ENCODE measurements at regions of chr1 and their contacts with region 1.

Region 1: DNA sequence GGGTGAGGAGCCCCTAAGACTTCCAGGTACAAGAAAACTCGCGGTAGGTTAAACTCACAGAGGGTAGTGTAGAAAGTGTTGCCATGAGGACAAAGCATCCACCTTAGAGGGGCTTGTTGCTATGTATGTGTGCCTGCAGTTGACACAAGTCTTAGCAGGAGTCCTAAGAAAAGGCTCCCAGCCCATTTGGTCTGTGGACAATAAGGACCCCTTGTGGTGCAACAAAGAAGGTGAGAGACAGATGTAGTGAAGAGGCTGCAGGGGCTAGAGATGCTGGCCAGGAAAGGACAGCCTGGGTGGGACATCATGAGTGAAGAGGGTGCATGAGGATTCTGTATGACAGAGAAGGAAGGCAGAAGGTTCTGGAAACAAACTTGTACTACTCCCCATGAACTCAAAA is 36.3 kb upstream of the IL10 start:
- DNase-seq: peak; percentile 66
- H3K4me3 Mint-ChIP-seq: no peak overlapping the region
- H3K27ac Mint-ChIP-seq: peak overlapping the region; percentile 3
- H3K4me1 Mint-ChIP-seq: peaks cover 45% of the 10 kb centered on the region
- H3K27me3 Mint-ChIP-seq: no peaks in the 10 kb centered on the region

Region 2: DNA sequence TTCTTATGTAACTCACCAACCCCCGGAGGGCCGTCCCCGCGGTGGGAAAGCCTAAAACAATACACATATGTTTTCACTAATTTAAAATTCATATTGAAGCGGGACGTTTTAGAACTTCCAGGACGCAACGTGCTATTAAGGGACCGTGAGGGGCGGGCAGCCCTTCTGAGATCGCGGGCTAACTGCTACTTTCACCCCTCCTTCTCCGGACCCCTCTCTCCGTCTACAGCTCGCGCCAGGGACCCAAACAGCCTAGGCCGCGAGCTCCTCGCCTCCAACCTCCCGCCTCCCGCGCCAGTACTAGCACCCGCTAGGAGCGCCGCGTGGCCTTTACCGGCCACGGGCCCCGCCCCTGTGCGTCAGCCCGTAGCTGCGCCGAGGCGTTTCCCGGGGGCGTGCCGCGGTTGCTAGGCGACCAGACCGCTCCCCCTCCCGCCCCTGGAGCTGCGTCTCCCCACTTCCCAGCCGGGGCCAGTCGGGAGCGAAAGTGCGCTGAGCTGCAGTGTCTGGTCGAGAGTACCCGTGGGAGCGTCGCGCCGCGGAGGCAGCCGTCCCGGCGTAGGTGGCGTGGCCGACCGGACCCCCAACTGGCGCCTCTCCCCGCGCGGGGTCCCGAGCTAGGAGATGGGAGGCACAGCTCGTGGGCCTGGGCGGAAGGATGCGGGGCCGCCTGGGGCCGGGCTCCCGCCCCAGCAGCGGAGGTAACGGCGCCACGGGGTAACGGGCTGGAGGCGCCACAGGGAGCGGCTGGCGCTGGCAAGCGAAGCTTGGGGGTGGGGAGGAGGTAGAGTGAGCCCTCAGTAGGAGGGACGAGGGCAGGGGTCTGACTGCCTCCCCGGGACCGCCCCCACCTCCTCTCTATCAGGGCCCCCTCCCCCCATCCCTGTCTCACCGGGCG is 173.3 kb before region 1 on chr1 and contains the start of gene DYRK3:
- CTCF ChIA-PET with region 1: interaction called, 7 read pairs
- POLR2A ChIA-PET with region 1: no interaction called
- intact Hi-C with region 1: loop called (anchors 2 kb)
- DNase-seq: peak; percentile 96
- H3K4me3 Mint-ChIP-seq: peak within 1 kb of the TSS; percentile 80
- H3K27ac Mint-ChIP-seq: peak within 1 kb of the TSS; percentile 80
- H3K4me1 Mint-ChIP-seq: peaks cover 25% of the 10 kb centered on the region
- H3K27me3 Mint-ChIP-seq: peaks cover 5% of the 10 kb centered on the region
- total RNA-seq, gene DYRK3: 10.1 to 11.4 TPM

Region 3: GRCh38 chr1:206734499-206735142 is 74.0 kb before region 1 on chr1:
- CTCF ChIA-PET with region 1: interaction called, 315 read pairs
- POLR2A ChIA-PET with region 1: interaction called, 30 read pairs
- intact Hi-C with region 1: loop called (anchors 1 kb)
- DNase-seq: peak; percentile 85
- H3K4me3 Mint-ChIP-seq: no peak overlapping the region
- H3K27ac Mint-ChIP-seq: peak overlapping the region; percentile 16
- H3K4me1 Mint-ChIP-seq: peaks cover 57% of the 10 kb centered on the region
- H3K27me3 Mint-ChIP-seq: no peaks in the 10 kb centered on the region

Region 4: GRCh38 chr1:206784471-206784903 is 24.1 kb before region 1 on chr1:
- CTCF ChIA-PET with region 1: interaction called, 18 read pairs
- POLR2A ChIA-PET with region 1: interaction called, 34 read pairs
- intact Hi-C with region 1: loop called (anchors 1 kb)
- DNase-seq: peak; percentile 96
- H3K4me3 Mint-ChIP-seq: peak overlapping the region; percentile 38
- H3K27ac Mint-ChIP-seq: peak overlapping the region; percentile 82
- H3K4me1 Mint-ChIP-seq: peaks cover 59% of the 10 kb centered on the region
- H3K27me3 Mint-ChIP-seq: peaks cover 22% of the 10 kb centered on the region

Region 5: GRCh38 chr1:206925106-206925736 is 116.6 kb after region 1 on chr1:
- CTCF ChIA-PET with region 1: interaction called, 13 read pairs
- POLR2A ChIA-PET with region 1: no interaction called
- intact Hi-C with region 1: no loop called
- DNase-seq: peak; percentile 82
- H3K4me3 Mint-ChIP-seq: no peak overlapping the region
- H3K27ac Mint-ChIP-seq: no peak overlapping the region
- H3K4me1 Mint-ChIP-seq: peaks cover 33% of the 10 kb centered on the region
- H3K27me3 Mint-ChIP-seq: no peaks in the 10 kb centered on the region

Measured in activated CD4-positive, alpha-beta memory T cell treated with anti-CD3 and anti-CD28 coated beads for 36 hours (primary cell).